ENCODE measurements at regions of chr6 and their contacts with region 1.

Region 1: DNA sequence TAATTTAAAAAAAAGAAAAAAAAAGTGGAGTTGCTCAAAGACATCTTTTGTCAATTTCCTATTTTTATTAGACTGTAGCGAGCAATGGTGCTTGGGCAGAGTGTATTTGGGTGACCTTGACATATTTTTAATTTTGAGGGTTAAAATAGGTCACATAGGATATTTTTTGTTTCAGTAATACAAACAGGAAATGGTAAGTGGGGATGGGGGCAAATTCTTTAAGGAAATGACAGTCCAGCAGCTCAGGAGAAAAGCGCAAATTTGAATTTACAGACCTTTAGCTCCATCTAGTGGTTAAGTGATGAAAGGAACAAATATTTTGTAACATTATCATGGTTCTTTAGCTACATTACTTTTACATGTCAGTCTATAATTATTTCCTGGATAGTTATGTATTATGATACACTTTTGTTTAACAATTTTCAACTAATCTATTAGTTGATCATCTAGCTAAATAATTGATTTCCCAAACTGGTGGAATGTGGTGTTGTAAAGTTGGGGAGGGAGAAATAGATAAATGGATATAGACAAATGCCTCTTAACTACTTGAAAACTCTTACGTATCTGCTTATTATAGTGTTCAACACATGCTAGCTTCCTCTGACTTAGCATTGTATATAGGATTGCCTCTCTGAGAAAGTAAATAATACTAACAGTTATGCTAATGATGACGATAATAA is 10.0 kb downstream of the CITED2 start:
- DNase-seq: no peak
- H3K4me3 ChIP-seq: no peak overlapping the region
- H3K27ac ChIP-seq: no peak overlapping the region
- H3K4me1 ChIP-seq: no peaks in the 10 kb centered on the region
- H3K27me3 ChIP-seq: no peaks in the 10 kb centered on the region
- CTCF ChIP-seq: peak; percentile 76

Region 2: DNA sequence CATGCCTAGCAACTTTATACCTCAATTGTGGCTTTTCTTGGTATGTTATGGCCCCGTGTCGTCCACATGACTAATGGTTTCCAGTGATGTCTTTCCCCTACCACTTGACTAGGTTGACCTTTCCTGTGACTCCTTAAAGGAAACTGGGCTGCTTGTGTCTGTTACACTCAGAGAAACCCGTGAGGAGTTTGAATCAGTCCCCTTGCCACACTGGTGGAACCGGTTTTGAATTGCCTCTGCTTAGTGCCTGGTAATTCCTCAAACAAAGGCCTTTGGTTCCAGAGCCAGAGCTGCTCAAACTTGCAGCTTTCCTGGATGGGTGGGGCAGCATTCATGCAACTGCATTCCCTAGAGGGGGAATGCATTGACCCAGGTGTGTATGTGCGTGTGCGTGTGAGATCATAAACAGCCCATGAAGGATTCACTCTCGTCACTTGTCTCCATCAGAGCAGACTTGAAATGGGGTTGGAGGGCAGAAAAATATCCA is 546.6 kb before region 1 on chr6:
- intact Hi-C with region 1: loop called (anchors 5 kb)
- DNase-seq: peak; percentile 94
- H3K4me3 ChIP-seq: no peak overlapping the region
- H3K27ac ChIP-seq: peak overlapping the region; percentile 54
- H3K4me1 ChIP-seq: peaks cover 5% of the 10 kb centered on the region
- H3K27me3 ChIP-seq: no peaks in the 10 kb centered on the region
- CTCF ChIP-seq: no peak

Region 3: DNA sequence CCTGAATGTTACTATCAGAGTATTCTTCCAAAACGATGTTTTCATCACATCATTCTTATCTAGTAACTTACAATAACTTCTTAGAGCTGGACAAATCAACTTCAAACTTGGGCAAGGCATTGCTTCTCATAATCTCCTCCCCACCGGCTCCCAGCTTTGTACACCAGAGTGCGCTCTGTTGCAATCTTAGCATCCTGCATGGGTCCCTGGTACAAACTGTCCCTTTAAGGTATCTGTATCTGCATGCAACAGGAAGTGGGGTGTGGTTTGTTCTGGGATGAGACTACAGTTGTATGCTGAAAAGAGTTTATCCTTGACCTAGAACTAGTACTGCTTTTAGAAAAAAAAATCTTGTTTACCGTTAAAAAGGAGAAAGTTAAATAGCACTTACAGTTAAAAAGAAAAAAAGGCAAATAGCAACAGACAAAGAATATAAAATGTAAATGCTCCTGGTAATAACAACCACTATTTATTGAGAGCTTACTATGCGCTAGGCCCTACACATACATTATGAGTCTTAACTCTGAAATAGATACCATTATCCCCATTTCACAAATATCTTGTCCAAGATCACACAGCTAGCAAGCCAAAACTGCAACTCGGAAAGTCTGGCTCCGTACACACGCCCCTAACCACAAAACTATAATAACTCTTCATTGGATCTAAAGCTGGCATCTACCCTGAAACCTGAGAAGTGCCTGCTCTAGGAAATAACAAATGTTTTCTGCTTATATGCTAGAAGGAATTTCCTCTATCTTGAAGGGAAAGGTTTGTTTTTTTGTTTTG is 239.4 kb before region 1 on chr6:
- intact Hi-C with region 1: loop called (anchors 5 kb)
- DNase-seq: peak; percentile 79
- H3K4me3 ChIP-seq: no peak overlapping the region
- H3K27ac ChIP-seq: no peak overlapping the region
- H3K4me1 ChIP-seq: no peaks in the 10 kb centered on the region
- H3K27me3 ChIP-seq: no peaks in the 10 kb centered on the region
- CTCF ChIP-seq: peak; percentile 46

Region 4: DNA sequence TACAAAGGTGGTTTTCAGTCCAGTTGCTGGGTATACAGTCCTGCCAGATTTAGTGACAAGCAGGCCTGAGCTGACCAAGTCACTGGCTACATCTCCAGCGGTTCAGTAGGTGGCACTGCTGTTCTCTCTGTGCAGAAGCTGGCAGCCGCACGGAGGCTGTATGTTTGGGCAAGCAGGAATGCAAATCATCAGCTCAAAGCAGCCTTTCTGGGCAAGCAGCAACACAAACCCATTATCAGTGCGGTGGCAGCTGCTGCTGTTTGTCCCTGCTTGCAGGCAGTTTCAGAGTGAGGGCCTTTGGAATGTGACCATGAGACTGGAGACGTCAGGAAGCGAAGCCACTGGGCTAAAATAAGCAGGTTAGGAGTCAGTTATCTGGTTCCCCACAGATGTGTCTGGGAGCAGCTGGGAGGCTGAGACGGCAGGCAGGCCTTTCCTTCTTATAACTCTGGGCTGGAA is 145.1 kb before region 1 on chr6:
- intact Hi-C with region 1: loop called (anchors 2 kb)
- DNase-seq: peak; percentile 75
- H3K4me3 ChIP-seq: no peak overlapping the region
- H3K27ac ChIP-seq: peak overlapping the region; percentile 26
- H3K4me1 ChIP-seq: peaks cover 2% of the 10 kb centered on the region
- H3K27me3 ChIP-seq: no peaks in the 10 kb centered on the region
- CTCF ChIP-seq: peak; percentile 66

Region 5: GRCh38 chr6:139296927-139297326 is 67.5 kb before region 1 on chr6:
- intact Hi-C with region 1: no loop called
- DNase-seq: no peak
- H3K4me3 ChIP-seq: no peak overlapping the region
- H3K27ac ChIP-seq: no peak overlapping the region
- H3K4me1 ChIP-seq: no peaks in the 10 kb centered on the region
- H3K27me3 ChIP-seq: no peaks in the 10 kb centered on the region
- CTCF ChIP-seq: no peak